CD8-positive, alpha-beta memory T cell (primary cell): ENCODE measurements at regions of chr2 and their contacts with region 1.

Region 1: GRCh38 chr2:39091543-39091942 is 29.3 kb downstream of the SOS1 start:
- DNase-seq: no peak
- H3K4me3 ChIP-seq: no peak overlapping the region
- H3K4me3 Mint-ChIP-seq: no peak overlapping the region
- H3K27ac ChIP-seq: no peak overlapping the region
- H3K27ac Mint-ChIP-seq: peak overlapping the region in 6 of 8 donors; percentile 0 to 30 (median 10)
- H3K4me1 ChIP-seq: peaks cover 18% of the 10 kb centered on the region
- H3K4me1 Mint-ChIP-seq: peaks cover 55 to 81% (median 70%) of the 10 kb centered on the region in 3 donors
- H3K27me3 ChIP-seq: no peaks in the 10 kb centered on the region
- H3K27me3 Mint-ChIP-seq: no peaks in the 10 kb centered on the region

Region 2: GRCh38 chr2:38750891-38751595 is 340.5 kb before region 1 on chr2 and contains the start of gene SRSF7:
- CTCF ChIA-PET with region 1: no interaction called
- POLR2A ChIA-PET with region 1: no interaction called
- DNase-seq: peak; percentile 95 to 99 (median 96)
- H3K4me3 ChIP-seq: peak within 1 kb of the TSS; percentile 96
- H3K4me3 Mint-ChIP-seq: peak within 1 kb of the TSS; percentile 95 to 100 (median 99)
- H3K27ac ChIP-seq: peak within 1 kb of the TSS; percentile 98
- H3K27ac Mint-ChIP-seq: peak within 1 kb of the TSS; percentile 98 to 100 (median 100)
- H3K4me1 ChIP-seq: peaks cover 55% of the 10 kb centered on the region
- H3K4me1 Mint-ChIP-seq: peaks cover 61 to 67% (median 65%) of the 10 kb centered on the region in 3 donors
- H3K27me3 ChIP-seq: no peaks in the 10 kb centered on the region
- H3K27me3 Mint-ChIP-seq: peaks cover 0 to 18% of the 10 kb centered on the region in 2 donors
- total RNA-seq, gene SRSF7: 378 to 381 TPM

Region 3: DNA sequence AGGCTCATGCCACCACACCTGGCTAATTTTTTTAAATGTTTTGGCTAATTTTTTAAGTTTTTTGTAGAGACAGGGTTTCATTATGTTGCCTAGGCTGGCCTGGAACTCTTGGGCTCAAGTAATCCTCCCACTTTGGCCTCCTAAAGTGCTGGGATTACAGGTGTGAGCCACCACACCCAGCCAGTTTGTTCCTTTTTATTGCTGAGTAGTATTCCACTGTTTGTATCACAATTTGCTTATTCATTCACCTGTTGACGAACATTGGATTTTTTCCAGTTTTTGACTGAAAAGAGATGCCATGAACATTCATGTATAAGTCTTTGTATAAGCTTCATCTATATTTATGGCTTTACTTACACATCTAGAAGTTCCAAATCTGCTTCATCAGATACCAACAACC is 24.0 kb after region 1 on chr2:
- CTCF ChIA-PET with region 1: interaction called, 3 read pairs
- POLR2A ChIA-PET with region 1: interaction called, 15 read pairs
- DNase-seq: no peak
- H3K4me3 ChIP-seq: no peak overlapping the region
- H3K4me3 Mint-ChIP-seq: peak overlapping the region in 1 of 7 donors; percentile 6
- H3K27ac ChIP-seq: no peak overlapping the region
- H3K27ac Mint-ChIP-seq: peak overlapping the region in 5 of 8 donors; percentile 2 to 47 (median 8)
- H3K4me1 ChIP-seq: peaks cover 21% of the 10 kb centered on the region
- H3K4me1 Mint-ChIP-seq: peaks cover 61 to 83% (median 81%) of the 10 kb centered on the region in 3 donors
- H3K27me3 ChIP-seq: no peaks in the 10 kb centered on the region
- H3K27me3 Mint-ChIP-seq: no peaks in the 10 kb centered on the region

Region 4: DNA sequence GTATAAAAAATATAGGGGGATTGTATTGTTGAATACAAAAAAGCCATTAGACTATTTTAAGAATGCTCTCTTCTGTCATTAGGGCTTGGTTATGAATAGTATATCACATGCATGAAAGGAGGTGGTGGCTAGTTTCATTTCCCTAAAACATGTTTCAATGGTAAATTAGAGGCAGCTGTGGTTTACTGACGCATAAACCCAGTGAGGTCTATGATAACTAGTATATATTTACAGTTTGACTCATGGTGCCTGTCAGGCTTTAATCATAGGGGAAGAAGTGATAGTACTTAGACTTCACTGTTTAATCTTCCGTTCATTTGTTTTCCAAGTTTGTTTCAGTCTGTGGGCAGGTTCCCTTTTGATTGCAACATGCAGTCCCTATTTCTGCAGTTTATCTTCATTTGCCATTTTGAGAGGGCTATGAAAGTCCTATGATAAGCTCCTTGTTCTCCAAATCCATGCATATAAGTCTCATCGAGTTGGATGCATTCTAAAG is 400.6 kb after region 1 on chr2:
- CTCF ChIA-PET with region 1: no interaction called
- POLR2A ChIA-PET with region 1: no interaction called
- DNase-seq: no peak
- H3K4me3 ChIP-seq: no peak overlapping the region
- H3K4me3 Mint-ChIP-seq: no peak overlapping the region
- H3K27ac ChIP-seq: no peak overlapping the region
- H3K27ac Mint-ChIP-seq: no peak overlapping the region
- H3K4me1 ChIP-seq: no peaks in the 10 kb centered on the region
- H3K4me1 Mint-ChIP-seq: peaks cover 0 to 8% (median 5%) of the 10 kb centered on the region in 3 donors
- H3K27me3 ChIP-seq: no peaks in the 10 kb centered on the region
- H3K27me3 Mint-ChIP-seq: peaks cover 3 to 6% of the 10 kb centered on the region in 2 donors